ENCODE measurements at regions of chr4 and their contacts with region 1.

Region 1: GRCh38 chr4:99949034-99949998 is 759 bp downstream of the H2AZ1 start:
- DNase-seq: peak; percentile 82
- H3K4me3 Mint-ChIP-seq: no peak overlapping the region
- H3K27ac Mint-ChIP-seq: no peak overlapping the region
- H3K4me1 Mint-ChIP-seq: peaks cover 30% of the 10 kb centered on the region
- H3K27me3 Mint-ChIP-seq: no peaks in the 10 kb centered on the region

Region 2: GRCh38 chr4:98143001-98143899 is 1806.1 kb before region 1 on chr4 and contains the start of gene STPG2:
- intact Hi-C with region 1: loop called (anchors 2 kb)
- DNase-seq: peak; percentile 91
- H3K4me3 Mint-ChIP-seq: peak within 1 kb of the TSS; percentile 88
- H3K27ac Mint-ChIP-seq: peak within 1 kb of the TSS; percentile 93
- H3K4me1 Mint-ChIP-seq: peaks cover 18% of the 10 kb centered on the region
- H3K27me3 Mint-ChIP-seq: peaks cover 7% of the 10 kb centered on the region
- total RNA-seq, gene STPG2: not detected in 2 replicates

Region 3: GRCh38 chr4:98928505-98929340 is 1020.6 kb before region 1 on chr4 and contains the start of gene EIF4E:
- intact Hi-C with region 1: loop called (anchors 2 kb)
- DNase-seq: peak; percentile 96
- H3K4me3 Mint-ChIP-seq: peak within 1 kb of the TSS; percentile 98
- H3K27ac Mint-ChIP-seq: peak within 1 kb of the TSS; percentile 100
- H3K4me1 Mint-ChIP-seq: peaks cover 46% of the 10 kb centered on the region
- H3K27me3 Mint-ChIP-seq: no peaks in the 10 kb centered on the region
- total RNA-seq, gene EIF4E: 137 and 147 TPM in 2 replicates

Region 4: GRCh38 chr4:98939892-98940298 is 1009.4 kb before region 1 on chr4:
- intact Hi-C with region 1: no loop called
- DNase-seq: no peak
- H3K4me3 Mint-ChIP-seq: no peak overlapping the region
- H3K27ac Mint-ChIP-seq: no peak overlapping the region
- H3K4me1 Mint-ChIP-seq: no peaks in the 10 kb centered on the region
- H3K27me3 Mint-ChIP-seq: no peaks in the 10 kb centered on the region

Region 5: DNA sequence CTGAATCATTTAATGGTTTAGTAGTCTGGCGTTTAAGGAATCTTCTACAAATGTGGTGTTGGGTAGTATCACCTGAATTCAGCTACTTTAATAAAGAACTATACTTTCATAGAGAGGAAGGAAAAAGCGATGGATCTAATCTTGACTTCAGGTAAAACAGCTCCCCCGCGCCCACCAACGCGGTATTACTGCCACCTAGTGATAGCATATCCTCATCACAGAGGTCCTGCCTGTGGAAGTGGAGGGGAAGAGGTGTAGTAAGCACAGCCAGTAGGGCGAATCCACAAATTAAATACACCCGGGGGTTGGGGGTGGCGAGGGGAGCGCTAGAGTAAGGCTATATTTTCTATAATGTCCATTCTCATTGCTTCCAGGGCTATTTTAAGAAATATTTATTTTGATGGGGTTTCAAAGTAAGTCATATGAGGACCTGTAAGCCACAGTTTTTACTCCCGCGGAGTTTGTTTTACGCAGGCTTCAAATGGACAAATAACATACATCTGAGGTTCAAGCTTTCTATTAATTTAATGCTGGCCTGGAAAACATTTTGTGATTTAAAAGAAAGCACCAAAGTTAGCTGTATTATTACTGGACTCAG is 141.0 kb before region 1 on chr4:
- intact Hi-C with region 1: loop called (anchors 1 kb)
- DNase-seq: peak; percentile 63
- H3K4me3 Mint-ChIP-seq: no peak overlapping the region
- H3K27ac Mint-ChIP-seq: no peak overlapping the region
- H3K4me1 Mint-ChIP-seq: peaks cover 16% of the 10 kb centered on the region
- H3K27me3 Mint-ChIP-seq: peaks cover 11% of the 10 kb centered on the region

Region 6: DNA sequence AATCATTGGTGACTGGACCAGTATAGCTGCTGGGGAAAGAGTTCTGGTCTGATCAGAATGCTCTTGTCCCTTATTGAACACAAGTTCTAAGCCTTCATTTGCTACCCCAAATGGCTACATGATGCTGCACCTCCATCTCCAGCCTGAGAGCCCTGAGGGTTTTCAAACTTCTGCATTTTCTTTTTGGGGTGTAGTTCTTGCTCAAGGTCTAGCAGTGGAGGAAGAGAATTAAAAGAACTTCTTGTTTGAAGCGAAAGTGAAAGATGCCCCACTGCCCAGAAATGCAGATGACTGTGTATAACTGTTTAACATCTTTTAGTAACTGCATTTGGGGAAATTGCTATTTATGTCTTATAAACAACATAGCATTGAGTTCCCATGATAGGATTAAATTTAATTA is 93.6 kb before region 1 on chr4:
- intact Hi-C with region 1: loop called (anchors 1 kb)
- DNase-seq: no peak
- H3K4me3 Mint-ChIP-seq: peak overlapping the region; percentile 59
- H3K27ac Mint-ChIP-seq: peak overlapping the region; percentile 71
- H3K4me1 Mint-ChIP-seq: peaks cover 86% of the 10 kb centered on the region
- H3K27me3 Mint-ChIP-seq: no peaks in the 10 kb centered on the region

Region 7: DNA sequence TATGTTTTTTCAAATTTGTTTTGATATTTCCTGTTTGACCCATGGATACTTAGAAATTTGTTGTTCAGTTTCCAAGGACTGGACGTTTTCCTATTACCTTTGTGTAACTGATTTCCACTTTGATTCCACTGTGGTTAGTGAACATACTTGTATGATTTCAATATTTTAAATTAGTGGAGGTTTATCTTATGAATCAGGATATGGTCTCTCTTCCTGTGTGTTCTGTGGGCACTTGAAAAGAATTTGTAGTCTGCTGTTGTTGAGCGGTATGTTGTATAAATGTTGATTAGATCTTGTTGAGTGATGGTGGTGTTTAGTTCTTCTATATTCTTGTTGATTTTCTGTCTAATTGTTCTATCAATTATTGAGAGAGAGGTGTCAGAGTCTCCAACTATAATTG is 33.9 kb before region 1 on chr4:
- intact Hi-C with region 1: loop called (anchors 5 kb)
- DNase-seq: no peak
- H3K4me3 Mint-ChIP-seq: no peak overlapping the region
- H3K27ac Mint-ChIP-seq: peak overlapping the region; percentile 8
- H3K4me1 Mint-ChIP-seq: peaks cover 6% of the 10 kb centered on the region
- H3K27me3 Mint-ChIP-seq: no peaks in the 10 kb centered on the region

Region 8: GRCh38 chr4:100206850-100207249 is 257.5 kb after region 1 on chr4:
- intact Hi-C with region 1: no loop called
- DNase-seq: no peak
- H3K4me3 Mint-ChIP-seq: no peak overlapping the region
- H3K27ac Mint-ChIP-seq: no peak overlapping the region
- H3K4me1 Mint-ChIP-seq: peaks cover 32% of the 10 kb centered on the region
- H3K27me3 Mint-ChIP-seq: peaks cover 17% of the 10 kb centered on the region

Region 9: DNA sequence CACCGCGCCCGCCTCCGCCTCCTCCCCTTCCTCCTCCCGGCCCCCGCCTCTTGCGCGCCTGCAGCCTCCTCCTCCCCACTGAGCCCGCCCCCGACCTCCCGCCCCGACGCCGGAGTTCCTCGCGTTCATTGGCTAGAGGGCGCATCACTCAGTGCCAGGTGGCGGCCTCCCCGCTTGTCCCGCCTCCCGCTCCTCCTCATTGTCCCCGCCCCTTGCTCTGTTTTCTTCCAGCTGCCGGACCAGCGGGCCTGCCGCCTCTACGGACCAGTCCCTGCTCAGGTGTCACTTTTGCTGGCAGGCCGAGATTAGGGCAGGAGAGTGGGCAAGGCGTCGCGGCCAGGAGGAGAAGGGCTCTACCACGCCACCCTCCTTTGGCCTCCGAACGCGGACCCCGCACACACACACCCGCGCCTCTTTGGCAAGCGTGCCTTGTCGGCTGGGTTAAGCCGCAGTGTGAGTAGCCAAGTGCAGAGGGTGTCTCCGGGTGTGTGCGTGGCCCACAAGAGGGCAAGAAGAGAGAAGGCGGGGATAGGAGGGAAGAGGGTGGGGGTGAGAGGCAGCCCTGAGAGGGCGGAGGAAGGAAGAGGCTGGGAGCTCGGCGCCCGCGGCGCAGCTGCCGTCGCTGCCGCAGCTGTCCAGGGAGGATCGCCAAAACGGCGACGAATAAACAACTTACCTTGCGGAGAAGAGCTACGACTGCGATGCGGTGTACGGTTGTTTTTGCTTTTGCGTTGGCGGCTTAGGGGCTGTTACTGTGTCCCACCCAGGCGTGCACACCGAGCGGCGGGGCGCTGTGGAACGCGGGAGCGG is 1398.4 kb after region 1 on chr4:
- intact Hi-C with region 1: loop called (anchors 1 kb)
- DNase-seq: peak; percentile 95
- H3K4me3 Mint-ChIP-seq: peak overlapping the region; percentile 92
- H3K27ac Mint-ChIP-seq: peak overlapping the region; percentile 88
- H3K4me1 Mint-ChIP-seq: peaks cover 33% of the 10 kb centered on the region
- H3K27me3 Mint-ChIP-seq: peaks cover 53% of the 10 kb centered on the region